Gastrocnemius medialis (tissue), 4 donors: ENCODE measurements at regions of chr9 and their contacts with region 1.

Region 1: DNA sequence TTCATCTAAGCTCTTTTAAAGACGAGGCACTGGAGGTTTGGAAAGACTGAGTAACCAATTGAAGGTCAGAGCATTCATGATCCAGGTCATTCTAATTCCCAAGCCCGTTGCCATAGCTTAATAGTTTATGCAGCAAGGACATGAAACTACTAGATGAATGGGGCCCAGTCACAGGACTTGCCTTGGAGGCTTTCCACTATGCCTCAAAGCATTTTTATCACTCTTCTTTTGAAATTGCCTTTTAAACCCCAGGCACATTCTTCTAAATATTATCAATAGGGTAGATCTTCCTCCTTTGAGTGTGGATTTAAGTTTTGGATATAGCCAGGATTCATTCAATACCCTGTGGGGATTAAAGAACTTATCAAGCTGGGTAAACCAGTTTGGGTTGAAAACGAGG is 17.2 kb upstream of the NFIB start:
- DNase-seq: no peak
- ATAC-seq: no peak
- H3K4me3 ChIP-seq: no peak overlapping the region
- H3K27ac ChIP-seq: no peak overlapping the region
- H3K4me1 ChIP-seq: peaks cover 10 to 11% of the 10 kb centered on the region in 2 donors
- H3K27me3 ChIP-seq: no peaks in the 10 kb centered on the region
- CTCF ChIP-seq: no peak
- POLR2A ChIP-seq: no peak

Region 2: GRCh38 chr9:13942695-13943094 is 388.5 kb before region 1 on chr9:
- in situ Hi-C with region 1: no loop called
- intact Hi-C with region 1: no loop called
- DNase-seq: peak; percentile 15 to 41
- ATAC-seq: peak; percentile 97
- H3K4me3 ChIP-seq: no peak overlapping the region
- H3K27ac ChIP-seq: peak overlapping the region in 3 of 4 donors; percentile 8 to 44 (median 20)
- H3K4me1 ChIP-seq: peaks cover 5 to 9% of the 10 kb centered on the region in 2 donors
- H3K27me3 ChIP-seq: no peaks in the 10 kb centered on the region
- CTCF ChIP-seq: no peak
- POLR2A ChIP-seq: no peak

Region 3: DNA sequence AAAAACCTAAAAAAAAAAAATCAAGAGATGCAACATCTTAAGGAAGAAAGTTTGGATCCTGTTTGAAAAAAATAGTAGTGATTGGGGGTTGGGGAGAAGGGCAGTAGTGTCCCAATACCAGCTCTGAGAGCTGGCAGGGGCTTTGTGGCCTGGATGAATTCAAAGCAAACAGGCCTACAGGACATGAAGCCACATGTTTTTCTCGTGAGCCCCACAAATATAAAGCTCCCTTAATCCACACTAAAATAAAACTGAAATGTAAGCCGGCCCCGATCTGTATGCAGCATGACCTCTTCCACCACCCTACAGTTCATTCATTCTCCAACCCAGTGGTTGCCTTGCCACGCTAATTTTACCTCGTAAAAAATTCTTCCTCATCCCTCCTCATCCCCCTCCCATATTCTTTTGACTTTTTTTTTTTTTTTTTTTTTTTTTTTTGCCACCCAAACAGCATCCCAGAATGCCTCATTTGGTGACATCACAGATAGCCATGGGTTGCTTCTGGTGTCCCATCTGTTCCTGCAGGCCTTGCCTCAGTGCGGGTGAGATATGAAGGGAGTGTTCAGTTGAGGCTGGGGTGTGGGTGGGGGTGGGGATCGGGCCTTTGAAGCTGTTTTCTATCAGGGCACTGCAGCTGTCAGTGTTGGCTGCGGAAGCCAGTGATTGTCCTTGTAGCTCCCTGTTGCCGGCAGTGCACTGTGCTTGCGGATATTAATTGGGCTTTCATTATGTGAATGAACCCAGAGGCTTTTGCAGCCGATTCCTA is 64.3 kb after region 1 on chr9:
- in situ Hi-C with region 1: loop called in 1 of 4 experiments (anchors 10 kb)
- intact Hi-C with region 1: loop called (anchors 1 kb)
- DNase-seq: peak; percentile 32 to 51
- ATAC-seq: peak; percentile 52 to 71
- H3K4me3 ChIP-seq: peak overlapping the region; percentile 23 to 56 (median 38)
- H3K27ac ChIP-seq: peak overlapping the region; percentile 71 to 78 (median 76)
- H3K4me1 ChIP-seq: peaks cover 6 to 29% of the 10 kb centered on the region in 2 donors
- H3K27me3 ChIP-seq: no peaks in the 10 kb centered on the region
- CTCF ChIP-seq: no peak
- POLR2A ChIP-seq: no peak